ENCODE measurements at regions of chr15 and their contacts with region 1.

Region 1: GRCh38 chr15:40098489-40099261 is 10.0 kb downstream of the BMF start:
- DNase-seq: peak; percentile 65 to 90
- H3K4me3 ChIP-seq: peak overlapping the region in 1 of 2 donors; percentile 20
- H3K27ac ChIP-seq: peak overlapping the region; percentile 92
- H3K4me1 ChIP-seq: peaks cover 45 to 78% of the 10 kb centered on the region in 2 donors
- H3K27me3 ChIP-seq: no peaks in the 10 kb centered on the region
- CTCF ChIP-seq: no peak

Region 2: DNA sequence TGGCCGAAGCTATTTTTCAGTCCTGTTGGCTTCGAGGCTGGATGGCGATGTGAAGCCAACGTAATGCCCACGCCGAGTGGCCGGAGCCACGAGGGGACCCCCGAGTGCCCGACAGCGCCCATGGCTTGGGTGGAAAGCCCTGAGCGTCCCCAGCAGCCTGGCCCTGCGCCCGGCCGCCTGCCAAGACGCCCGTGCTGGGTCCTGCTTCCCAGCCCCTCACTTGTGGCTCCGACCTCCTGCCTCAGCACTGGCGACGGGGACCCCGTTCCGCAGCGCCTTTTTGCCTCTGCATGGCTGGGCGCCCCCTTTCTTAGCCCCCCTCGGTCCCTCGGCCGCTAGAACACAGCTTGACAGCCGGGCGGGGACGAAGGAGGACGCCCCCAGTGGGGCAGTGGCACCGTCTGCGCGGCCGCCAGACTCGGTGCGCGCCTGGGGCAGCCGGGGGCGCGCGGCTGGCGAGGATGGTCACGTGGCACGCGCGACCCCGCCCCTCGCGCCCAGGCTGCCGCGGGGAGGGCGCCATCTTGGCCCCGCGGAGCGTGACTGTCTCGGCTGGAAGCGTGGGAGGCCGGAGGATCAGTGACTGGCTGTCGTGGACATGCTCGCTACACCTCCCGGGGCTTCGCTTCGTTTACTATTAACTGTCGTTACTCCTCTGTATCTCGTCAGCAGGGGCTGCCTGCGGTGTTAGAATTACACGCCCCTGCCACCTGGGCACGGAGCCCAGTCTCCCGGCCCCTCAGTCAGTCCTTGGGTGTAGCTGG is 178.0 kb before region 1 on chr15:
- intact Hi-C with region 1: loop called (anchors 5 kb)
- DNase-seq: peak; percentile 27 to 89
- H3K4me3 ChIP-seq: peak overlapping the region; percentile 80 to 88
- H3K27ac ChIP-seq: peak overlapping the region; percentile 92 to 94
- H3K4me1 ChIP-seq: no peaks in the 10 kb centered on the region
- H3K27me3 ChIP-seq: no peaks in the 10 kb centered on the region
- CTCF ChIP-seq: no peak

Region 3: GRCh38 chr15:40038638-40039543 is 59.8 kb before region 1 on chr15 and contains the start of gene SRP14:
- intact Hi-C with region 1: loop called (anchors 1 kb)
- DNase-seq: peak; percentile 88 to 98
- H3K4me3 ChIP-seq: peak within 1 kb of the TSS; percentile 74 to 82
- H3K27ac ChIP-seq: peak within 1 kb of the TSS; percentile 87 to 93
- H3K4me1 ChIP-seq: peaks cover 0 to 7% of the 10 kb centered on the region in 2 donors
- H3K27me3 ChIP-seq: no peaks in the 10 kb centered on the region
- CTCF ChIP-seq: peak in 1 of 3 experiments; percentile 41
- total RNA-seq, gene SRP14: 365 TPM

Region 4: GRCh38 chr15:40069178-40070165 is 29.2 kb before region 1 on chr15:
- intact Hi-C with region 1: loop called (anchors 1 kb)
- DNase-seq: peak; percentile 65 to 97
- H3K4me3 ChIP-seq: no peak overlapping the region
- H3K27ac ChIP-seq: peak overlapping the region; percentile 75 to 79
- H3K4me1 ChIP-seq: peaks cover 7 to 16% of the 10 kb centered on the region in 2 donors
- H3K27me3 ChIP-seq: no peaks in the 10 kb centered on the region
- CTCF ChIP-seq: no peak

Measured in ascending aorta (tissue), 2 donors.